KBM-7 (cell line): ENCODE measurements at regions of chr14 and their contacts with region 1.

Region 1: DNA sequence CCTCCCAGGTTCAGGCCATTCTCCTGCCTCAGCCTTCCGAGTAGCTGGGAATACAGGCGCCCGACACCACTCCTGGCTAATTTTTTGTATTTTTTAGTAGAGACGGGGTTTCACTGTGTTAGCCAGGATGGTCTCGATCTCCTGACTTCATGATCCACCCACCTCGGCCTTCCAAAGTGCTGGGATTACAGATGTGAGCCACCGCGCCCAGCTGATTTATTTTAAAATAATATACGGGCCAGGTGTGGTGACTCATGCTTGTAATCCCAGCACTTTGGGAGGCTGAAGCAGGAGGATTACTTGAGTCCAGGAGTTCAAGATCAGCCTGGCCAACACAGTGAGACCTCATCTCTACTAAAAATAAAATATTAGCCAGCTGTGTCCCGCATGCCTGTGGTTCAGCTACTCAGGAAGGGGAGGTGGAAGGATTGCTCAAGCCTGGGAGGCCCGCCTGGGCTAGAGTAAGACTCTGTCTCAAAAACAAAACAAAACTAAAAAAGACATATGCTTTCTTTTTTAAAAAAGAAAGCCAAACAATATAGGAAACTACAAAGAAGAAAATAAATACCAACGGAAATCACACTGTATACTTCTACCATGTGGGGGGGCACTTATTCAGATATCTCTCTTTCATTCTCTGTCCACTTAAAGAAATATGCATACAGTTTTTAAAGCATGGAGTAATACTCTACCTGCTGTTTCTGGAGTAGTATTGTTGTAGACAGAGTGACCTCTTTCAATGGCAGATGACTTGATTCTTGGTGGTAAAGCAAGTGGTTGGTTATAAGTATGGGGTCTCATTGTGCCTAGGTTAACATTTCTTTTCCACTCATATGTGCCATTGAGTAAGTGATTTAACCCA is 930 bp upstream of the MIA2 start:
- DNase-seq: peak; percentile 52

Region 2: GRCh38 chr14:38629412-38629811 is 603.4 kb before region 1 on chr14:
- in situ Hi-C with region 1: no loop called
- DNase-seq: no peak

Region 3: DNA sequence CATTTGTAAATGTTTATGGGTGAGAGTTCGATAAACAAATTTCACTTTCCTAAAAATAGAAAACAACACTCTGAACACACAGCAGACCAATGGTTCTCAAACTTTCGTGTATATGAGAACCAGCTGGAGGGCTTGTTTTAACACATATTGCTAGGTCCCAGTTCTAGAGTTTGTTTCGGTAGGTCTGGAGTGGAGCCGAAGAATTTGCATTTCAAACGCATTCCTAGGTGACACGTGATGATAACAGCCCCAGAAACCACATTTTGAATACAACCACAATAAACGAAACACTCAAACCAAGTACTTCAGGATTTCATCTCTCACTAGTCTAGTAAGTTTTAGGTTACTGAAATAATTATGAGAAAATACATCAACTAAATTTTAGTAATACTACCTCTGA is 146.9 kb before region 1 on chr14:
- in situ Hi-C with region 1: no loop called
- DNase-seq: no peak

Region 4: GRCh38 chr14:39368261-39368959 is 135.6 kb after region 1 on chr14:
- in situ Hi-C with region 1: loop called (anchors 25 kb)
- DNase-seq: peak; percentile 68